Naive thymus-derived CD8-positive, alpha-beta T cell (primary cell): ENCODE measurements at regions of chr20 and their contacts with region 1.

Region 1: DNA sequence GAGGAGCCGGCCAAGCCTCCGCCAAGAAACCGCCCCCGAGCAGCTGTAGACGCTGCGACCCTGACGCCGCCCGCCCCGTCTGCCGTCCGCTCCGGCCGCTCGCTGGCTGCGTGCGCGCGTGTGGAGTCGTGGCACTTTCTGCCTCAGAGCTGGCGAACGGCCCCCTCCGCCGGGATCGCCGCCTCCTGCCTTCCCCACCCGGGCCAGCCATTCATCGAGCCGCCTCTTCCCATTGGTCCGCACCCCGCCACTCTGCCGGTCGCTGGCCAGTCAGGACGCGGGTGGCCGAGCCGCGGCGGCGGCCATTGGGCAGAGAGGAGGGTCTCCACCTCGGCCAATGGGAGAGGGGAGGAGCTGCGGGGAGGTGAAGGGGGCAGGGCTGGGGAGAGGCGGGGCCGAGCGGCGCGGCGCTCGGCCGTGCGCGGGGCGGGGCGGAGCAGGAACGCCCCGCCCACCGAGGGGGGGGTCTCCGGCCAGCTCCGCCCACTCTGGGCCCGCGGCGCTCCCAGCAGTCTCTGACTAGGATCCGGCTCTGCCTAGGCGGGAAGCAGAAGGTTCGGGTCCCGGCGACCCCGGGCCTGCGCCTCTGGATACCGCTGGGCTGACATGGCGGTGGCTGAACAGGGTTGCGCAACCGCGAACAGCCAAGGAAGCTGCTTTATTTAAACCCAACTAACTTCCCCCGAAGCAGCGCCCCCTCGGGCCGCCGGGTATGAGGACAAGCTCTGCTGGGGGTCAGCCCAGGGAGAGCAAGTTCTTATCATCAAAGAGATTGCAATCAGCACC is at the start of gene RRBP1:
- DNase-seq: peak; percentile 93 to 98 (median 96)
- ATAC-seq: peak; percentile 93
- H3K4me3 Mint-ChIP-seq: peak within 1 kb of the TSS; percentile 80 to 93 (median 89)
- H3K27ac Mint-ChIP-seq: peak within 1 kb of the TSS; percentile 34 to 93 (median 90)
- H3K4me1 Mint-ChIP-seq: peaks cover 12 to 29% (median 19%) of the 10 kb centered on the region in 4 donors
- H3K27me3 Mint-ChIP-seq: peaks cover 10 to 33% (median 26%) of the 10 kb centered on the region in 5 donors
- polyA plus RNA-seq, gene RRBP1: 1.7 to 8.9 (median 4.9) TPM

Region 2: DNA sequence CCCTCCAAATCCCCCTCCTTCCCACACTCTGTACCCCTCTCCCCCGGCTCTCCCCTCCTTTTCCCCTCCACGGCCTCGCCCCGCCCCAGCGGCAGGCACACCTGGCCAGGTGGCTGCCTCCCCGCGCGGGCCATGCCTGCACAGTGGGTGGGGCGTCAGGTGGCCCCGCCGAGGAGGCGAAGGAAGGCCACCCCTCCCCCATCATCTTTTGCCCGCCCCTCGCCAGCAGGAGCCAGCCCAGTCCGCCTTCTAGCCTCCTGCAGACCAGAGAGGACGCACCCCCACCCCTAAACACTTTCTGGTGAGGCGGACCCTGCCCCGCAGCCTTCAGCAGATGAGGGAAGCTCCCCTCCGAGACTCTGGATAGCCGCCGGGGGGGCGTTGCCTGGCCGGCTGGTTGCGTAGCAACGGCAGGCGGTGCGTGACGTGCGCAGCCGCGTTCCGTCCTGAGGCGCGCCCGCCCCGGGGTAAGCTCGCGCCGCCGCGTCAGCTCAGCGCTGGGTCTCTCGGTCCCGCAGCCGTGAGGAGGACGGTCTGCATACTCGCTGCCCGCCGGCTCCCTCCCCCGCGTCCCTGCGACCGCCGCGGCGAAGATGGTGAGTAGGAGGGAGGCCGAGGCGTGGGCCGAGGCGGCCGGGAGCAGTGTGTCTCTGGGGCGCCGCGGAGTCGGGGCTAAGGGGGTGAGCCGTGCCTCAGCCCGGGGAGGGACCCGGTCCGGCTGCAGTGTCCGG is 112.5 kb before region 1 on chr20 and contains the start of gene DSTN:
- POLR2A ChIA-PET with region 1: interaction called, 15 read pairs
- DNase-seq: peak; percentile 82 to 93 (median 87)
- ATAC-seq: peak; percentile 88
- H3K4me3 Mint-ChIP-seq: peak within 1 kb of the TSS; percentile 91 to 98 (median 94)
- H3K27ac Mint-ChIP-seq: peak within 1 kb of the TSS; percentile 75 to 98 (median 94)
- H3K4me1 Mint-ChIP-seq: peaks cover 19 to 37% (median 33%) of the 10 kb centered on the region in 4 donors
- H3K27me3 Mint-ChIP-seq: peaks cover 0 to 9% (median 0%) of the 10 kb centered on the region in 5 donors
- polyA plus RNA-seq, gene DSTN: 75.1 to 140 (median 81.6) TPM

Region 3: DNA sequence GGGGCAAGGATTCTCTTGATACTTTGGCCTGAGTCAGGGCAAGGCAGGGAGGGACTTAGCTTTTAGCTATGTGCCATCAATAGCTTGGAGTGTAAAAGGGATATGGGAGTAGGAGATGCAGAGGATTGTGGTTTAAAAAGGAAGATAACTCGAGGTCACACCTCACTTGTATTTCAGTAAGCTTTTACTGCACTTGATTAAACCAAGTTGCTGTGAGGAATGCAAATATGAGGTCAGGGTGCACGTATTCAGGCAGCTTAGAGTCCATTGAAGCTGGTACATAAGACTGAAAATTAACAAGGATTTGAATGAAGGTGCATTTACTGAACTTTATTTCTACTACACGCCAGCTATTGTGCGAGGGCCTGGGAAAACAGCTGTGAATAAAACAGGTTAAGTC is 80.3 kb before region 1 on chr20:
- POLR2A ChIA-PET with region 1: no interaction called
- DNase-seq: no peak
- ATAC-seq: no peak
- H3K4me3 Mint-ChIP-seq: no peak overlapping the region
- H3K27ac Mint-ChIP-seq: peak overlapping the region in 3 of 10 donors; percentile 24 to 71 (median 38)
- H3K4me1 Mint-ChIP-seq: peaks cover 3 to 8% (median 7%) of the 10 kb centered on the region in 4 donors
- H3K27me3 Mint-ChIP-seq: no peaks in the 10 kb centered on the region

Region 4: DNA sequence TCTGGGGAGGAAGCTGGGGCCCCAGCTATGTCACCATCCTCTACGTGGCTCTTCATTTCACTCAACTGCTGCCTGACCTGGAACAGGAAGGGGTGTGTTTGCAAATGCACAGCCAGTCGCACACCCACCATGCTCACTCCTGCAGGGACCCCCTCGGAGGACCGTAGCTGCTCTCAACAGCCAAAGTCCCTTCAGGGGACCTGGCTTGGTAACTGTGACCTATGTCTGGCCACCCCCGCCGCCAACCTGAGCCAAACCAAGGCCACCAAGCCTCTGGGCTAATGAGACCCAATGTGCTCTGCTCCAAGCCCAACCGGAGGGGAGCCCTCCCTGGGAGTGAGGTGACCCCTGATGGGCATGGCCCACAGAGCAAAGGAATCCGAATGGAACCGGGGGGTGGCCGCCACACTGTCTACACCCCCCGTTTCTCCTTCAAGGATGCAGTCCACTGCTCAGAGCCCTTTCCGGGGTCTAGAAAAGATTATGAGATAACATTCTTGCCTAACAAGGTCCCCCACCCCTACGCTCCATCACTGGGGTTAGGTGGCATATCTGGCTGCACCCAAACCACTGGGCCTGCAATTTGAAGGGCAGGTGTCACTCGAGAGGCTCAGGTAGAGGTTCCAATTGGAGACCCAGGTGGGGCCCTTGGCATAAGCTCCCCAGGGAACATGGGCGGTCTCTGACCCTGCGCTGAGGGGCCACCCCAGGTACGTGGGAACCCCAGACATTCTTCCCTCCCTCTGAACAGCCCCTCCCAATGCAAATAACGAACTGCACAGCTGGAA is 65.3 kb before region 1 on chr20:
- POLR2A ChIA-PET with region 1: no interaction called
- DNase-seq: peak in 1 of 10 donors; percentile 15
- ATAC-seq: no peak
- H3K4me3 Mint-ChIP-seq: no peak overlapping the region
- H3K27ac Mint-ChIP-seq: peak overlapping the region in 2 of 10 donors; percentile 68 to 71
- H3K4me1 Mint-ChIP-seq: peaks cover 7 to 20% (median 12%) of the 10 kb centered on the region in 4 donors
- H3K27me3 Mint-ChIP-seq: no peaks in the 10 kb centered on the region

Region 5: DNA sequence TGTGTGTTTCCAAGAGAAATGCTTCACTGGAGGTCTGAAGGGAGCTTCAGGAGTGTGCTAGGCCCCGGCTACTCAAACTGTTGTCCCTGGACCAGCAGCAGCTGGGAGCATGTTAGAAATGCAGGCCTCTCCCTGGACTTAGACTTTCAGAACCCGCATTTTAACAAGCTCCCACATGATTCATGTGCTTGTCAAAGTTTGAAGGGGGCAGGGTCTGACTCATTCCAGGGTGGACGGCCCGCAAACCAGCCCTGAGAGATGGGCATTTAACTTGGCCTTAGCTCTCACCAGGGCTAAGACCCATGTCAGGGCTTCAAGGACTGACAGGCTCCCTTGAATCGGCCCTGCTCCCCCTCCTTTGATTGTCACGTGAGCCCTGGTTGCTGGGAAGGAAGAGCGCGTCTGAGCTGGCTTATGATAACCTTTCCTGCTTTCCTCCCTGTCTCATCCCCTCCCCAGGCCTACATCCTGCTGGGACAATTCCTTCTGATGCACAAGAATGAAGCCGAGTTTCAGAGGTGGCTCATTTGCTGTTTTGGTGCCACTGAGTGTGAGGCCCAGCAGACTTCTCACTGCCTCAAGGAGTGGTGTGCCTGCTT is 53.0 kb after region 1 on chr20:
- POLR2A ChIA-PET with region 1: no interaction called
- DNase-seq: no peak
- ATAC-seq: no peak
- H3K4me3 Mint-ChIP-seq: no peak overlapping the region
- H3K27ac Mint-ChIP-seq: no peak overlapping the region
- H3K4me1 Mint-ChIP-seq: no peaks in the 10 kb centered on the region
- H3K27me3 Mint-ChIP-seq: peaks cover 0 to 10% (median 5%) of the 10 kb centered on the region in 5 donors

Region 6: DNA sequence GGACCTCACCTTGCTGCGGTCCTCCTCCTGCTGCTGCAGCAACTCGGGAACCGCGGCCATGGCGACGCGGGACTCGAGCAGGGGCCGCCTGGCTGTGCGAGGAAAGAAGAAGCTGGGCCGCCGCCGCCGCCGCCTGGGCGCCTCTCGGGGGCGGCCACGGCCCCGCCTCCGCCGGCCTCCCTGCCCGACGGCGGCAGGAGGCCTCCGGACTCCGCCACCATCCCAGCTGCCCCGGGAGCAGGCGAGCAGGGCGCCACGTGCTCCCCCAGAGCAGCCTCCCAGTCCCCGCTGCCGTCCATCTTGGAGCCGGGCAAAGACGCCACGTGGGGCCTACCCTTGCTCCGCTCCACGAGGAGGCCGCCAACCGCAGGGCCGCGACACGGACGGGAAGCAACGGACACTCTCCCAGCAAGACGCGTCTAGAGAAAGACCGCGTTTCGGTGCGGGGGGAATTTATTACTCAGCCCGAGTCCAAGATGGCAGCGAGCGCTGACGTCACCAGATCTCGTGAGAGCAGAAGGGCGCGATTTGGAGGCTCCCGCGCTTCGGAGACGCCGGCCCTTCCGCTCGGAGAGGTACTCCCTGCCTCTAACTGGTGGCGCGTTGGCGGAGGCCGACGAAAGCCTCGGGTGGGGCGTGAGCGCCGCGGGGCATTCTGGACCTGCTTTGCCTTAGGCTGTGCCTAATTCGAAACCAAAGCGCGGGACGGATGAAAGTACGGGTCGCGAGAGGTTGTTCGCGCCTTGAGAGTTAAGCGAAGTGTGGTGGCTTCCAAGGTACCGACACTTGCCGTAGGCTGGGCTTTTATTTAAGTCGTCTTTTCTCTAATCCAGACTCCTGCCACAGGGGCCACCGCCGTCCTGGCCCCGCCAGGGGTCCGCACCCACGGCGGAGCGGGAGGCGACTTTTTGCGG is 286.3 kb after region 1 on chr20 and contains the starts of genes MGME1 and SNX5:
- POLR2A ChIA-PET with region 1: interaction called, 25 read pairs
- DNase-seq: peak; percentile 92 to 100 (median 98)
- ATAC-seq: peak; percentile 90 to 93
- H3K4me3 Mint-ChIP-seq: peak within 1 kb of the TSS; percentile 86 to 97 (median 94)
- H3K27ac Mint-ChIP-seq: peak within 1 kb of the TSS; percentile 93 to 99 (median 98)
- H3K4me1 Mint-ChIP-seq: peaks cover 30 to 82% (median 75%) of the 10 kb centered on the region in 4 donors
- H3K27me3 Mint-ChIP-seq: no peaks in the 10 kb centered on the region
- polyA plus RNA-seq, gene MGME1: 1.1 to 5.1 (median 2.1) TPM
- polyA plus RNA-seq, gene SNX5: 38.8 to 58.6 (median 44.4) TPM